ENCODE measurements at regions of chr13 and their contacts with region 1.

Region 1: DNA sequence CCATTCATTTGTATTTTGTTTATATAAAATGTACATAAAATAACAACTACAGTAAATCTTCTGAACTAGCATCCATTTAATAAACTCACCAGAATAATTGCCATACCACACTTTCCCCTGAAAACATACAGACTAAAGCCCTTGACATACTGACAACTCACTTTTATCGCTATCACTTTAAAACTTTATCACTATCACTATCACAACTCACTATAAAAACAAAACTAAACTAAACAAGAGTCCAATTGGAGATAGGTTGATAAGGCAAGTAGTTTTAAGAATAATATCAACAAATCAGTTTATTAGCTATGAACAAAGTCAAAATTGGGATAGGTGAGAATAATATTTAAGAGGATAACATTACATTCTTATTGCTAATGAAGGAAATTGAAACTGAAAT is 108.9 kb downstream of the SLITRK6 start:
- DNase-seq: no peak
- ATAC-seq: no peak
- H3K4me3 ChIP-seq: no peak overlapping the region
- H3K4me3 Mint-ChIP-seq: no peak overlapping the region
- H3K27ac ChIP-seq: no peak overlapping the region
- H3K27ac Mint-ChIP-seq: no peak overlapping the region
- H3K4me1 ChIP-seq: no peaks in the 10 kb centered on the region
- H3K4me1 Mint-ChIP-seq: no peaks in the 10 kb centered on the region
- H3K27me3 ChIP-seq: no peaks in the 10 kb centered on the region
- H3K27me3 Mint-ChIP-seq: no peaks in the 10 kb centered on the region
- CTCF ChIP-seq: no peak

Region 2: GRCh38 chr13:85709718-85710117 is 19.4 kb after region 1 on chr13:
- intact Hi-C with region 1: loop called (anchors 2 kb)
- DNase-seq: no peak
- ATAC-seq: no peak
- H3K4me3 ChIP-seq: no peak overlapping the region
- H3K4me3 Mint-ChIP-seq: no peak overlapping the region
- H3K27ac ChIP-seq: no peak overlapping the region
- H3K27ac Mint-ChIP-seq: no peak overlapping the region
- H3K4me1 ChIP-seq: no peaks in the 10 kb centered on the region
- H3K4me1 Mint-ChIP-seq: no peaks in the 10 kb centered on the region
- H3K27me3 ChIP-seq: no peaks in the 10 kb centered on the region
- H3K27me3 Mint-ChIP-seq: no peaks in the 10 kb centered on the region
- CTCF ChIP-seq: no peak

Measured in natural killer cell (primary cell).